Tibial artery (tissue), 4 donors: ENCODE measurements at regions of chr11 and their contacts with region 1.

Region 1: DNA sequence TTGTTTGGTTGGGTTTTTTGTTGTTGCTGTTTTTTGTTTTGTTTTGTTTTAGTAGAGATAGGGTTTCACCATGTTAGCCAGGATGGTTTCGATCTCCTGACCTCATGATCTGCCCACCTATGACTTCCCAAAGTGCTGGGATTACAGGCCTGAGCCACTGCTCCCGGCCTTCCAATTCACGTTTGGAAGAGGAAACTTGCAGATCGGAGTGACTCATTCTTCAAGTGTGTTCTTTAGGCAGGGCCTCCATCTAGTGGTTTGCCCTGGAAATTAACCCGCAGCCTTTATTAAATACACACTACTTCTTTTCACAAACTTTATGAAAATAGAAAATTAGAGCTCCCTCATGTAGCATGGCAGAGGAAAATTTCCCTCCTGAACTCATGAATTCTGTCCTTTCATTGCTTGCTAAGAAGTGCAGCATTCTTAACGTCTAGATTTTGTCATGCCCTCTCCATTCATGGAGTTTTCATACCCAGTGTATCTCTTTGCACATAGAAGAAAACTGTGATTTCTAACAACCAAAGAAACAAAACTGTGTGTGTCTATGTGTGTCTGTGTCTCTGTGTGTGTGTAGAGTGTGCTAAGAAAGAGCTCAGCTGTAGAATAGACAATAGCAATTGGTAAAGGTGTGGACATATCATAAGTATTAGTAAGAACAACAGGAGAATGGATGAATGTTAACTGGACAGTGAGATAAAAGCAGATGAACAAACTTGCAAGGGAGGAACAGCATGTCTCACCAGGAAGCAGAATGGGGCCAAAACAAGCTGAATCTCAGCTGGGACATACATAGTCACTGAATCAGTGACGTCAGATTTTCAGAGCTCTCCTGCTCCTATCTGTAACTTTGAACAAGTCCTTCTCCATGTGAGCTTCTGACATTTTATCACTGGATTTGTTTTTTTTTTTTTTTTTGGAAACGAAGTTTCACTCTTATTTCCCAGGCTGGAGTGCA is 118.4 kb downstream of the BBOX1 start:
- DNase-seq: peak; percentile 57 to 67
- H3K4me3 ChIP-seq: no peak overlapping the region
- H3K27ac ChIP-seq: no peak overlapping the region
- H3K4me1 ChIP-seq: no peaks in the 10 kb centered on the region
- H3K27me3 ChIP-seq: no peaks in the 10 kb centered on the region
- CTCF ChIP-seq: peak; percentile 89 to 93

Region 2: DNA sequence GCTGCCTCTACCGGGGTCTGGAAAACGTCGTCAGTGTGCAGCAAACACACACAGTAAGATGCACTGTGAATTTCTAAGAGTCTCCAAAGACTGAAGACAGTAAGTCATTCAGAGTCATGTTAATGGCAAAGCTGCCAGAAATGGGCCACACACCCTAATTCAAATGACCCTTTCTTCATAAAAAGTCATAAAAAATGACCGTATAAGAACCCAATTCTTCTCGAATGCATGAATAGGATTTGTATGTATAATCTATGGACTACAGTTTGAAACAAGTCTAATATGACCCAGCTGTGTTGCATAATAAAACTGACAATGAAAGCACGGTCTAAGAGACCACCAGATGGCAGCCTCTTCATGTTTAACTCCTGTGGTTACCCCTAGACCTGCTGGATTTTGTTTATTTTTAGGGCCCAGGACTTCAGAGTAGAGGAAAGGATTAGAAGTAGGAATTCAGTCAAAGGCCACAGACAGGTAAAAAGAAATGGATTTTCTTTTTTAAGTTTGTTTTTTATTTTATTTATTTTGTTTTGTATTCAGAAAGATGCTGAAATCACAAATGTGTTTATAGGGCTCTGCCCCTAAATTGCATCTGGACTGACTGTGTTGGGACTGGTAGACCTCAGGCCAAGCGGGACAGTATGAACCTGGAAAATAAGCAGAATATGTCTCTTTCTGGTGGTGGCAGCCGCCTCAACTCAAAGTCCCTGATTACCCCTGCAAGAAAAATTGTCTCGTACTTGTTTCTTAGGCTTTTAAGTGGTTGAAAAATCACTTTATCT is 405.1 kb before region 1 on chr11:
- intact Hi-C with region 1: loop called (anchors 5 kb)
- DNase-seq: peak; percentile 55 to 67
- H3K4me3 ChIP-seq: no peak overlapping the region
- H3K27ac ChIP-seq: no peak overlapping the region
- H3K4me1 ChIP-seq: peaks cover 0 to 25% (median 0%) of the 10 kb centered on the region in 4 donors
- H3K27me3 ChIP-seq: no peaks in the 10 kb centered on the region
- CTCF ChIP-seq: peak; percentile 74 to 89

Region 3: GRCh38 chr11:27339941-27340340 is 180.9 kb after region 1 on chr11:
- intact Hi-C with region 1: no loop called
- DNase-seq: no peak
- H3K4me3 ChIP-seq: no peak overlapping the region
- H3K27ac ChIP-seq: no peak overlapping the region
- H3K4me1 ChIP-seq: no peaks in the 10 kb centered on the region
- H3K27me3 ChIP-seq: no peaks in the 10 kb centered on the region
- CTCF ChIP-seq: no peak